GM13976 (cell line): ENCODE measurements at regions of chr3 and their contacts with region 1.

Region 1: DNA sequence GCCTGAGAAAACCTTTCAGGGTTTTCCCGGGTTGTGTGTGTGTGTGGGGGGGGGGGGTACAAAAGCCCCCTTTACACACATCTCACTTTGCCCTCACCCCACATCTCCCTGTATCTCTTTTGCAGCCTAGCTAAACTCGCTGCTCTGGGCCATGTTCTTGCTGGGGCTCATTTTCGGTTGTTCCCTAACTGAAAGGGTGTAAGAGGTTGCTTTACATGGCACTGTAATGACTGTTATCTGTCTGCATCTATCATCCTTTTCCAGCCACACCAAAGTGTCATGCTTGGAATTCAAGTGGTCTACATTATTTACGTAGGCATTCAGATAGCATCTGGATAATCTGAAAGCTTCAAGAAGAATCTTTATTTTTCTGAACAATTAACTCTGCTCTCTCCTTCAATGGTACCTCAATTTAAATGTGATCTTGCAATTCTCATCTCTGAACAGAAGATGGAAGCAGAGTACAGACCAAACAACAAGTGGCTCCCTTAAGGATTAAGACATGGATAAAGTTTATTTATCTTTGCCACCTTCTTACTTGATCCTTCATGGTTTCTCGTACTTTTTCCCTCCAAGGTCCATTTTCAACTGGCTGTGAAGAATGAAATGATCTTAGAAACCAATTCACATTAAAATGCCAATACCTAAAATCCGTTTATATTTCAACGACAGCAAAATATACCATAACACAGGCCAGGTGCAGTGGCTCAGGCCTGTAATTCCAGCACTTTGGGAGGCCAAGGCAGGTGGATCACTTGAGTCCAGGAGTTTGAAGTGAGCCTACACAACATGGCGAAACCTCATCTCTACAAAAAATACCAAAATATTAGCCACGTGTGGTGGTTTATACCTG is 34.9 kb downstream of the DCLK3 start:
- DNase-seq: peak; percentile 51
- CTCF ChIP-seq: peak; percentile 41

Region 2: GRCh38 chr3:36837089-36837488 is 107.7 kb after region 1 on chr3:
- in situ Hi-C with region 1: no loop called
- DNase-seq: no peak
- CTCF ChIP-seq: peak; percentile 31

Region 3: DNA sequence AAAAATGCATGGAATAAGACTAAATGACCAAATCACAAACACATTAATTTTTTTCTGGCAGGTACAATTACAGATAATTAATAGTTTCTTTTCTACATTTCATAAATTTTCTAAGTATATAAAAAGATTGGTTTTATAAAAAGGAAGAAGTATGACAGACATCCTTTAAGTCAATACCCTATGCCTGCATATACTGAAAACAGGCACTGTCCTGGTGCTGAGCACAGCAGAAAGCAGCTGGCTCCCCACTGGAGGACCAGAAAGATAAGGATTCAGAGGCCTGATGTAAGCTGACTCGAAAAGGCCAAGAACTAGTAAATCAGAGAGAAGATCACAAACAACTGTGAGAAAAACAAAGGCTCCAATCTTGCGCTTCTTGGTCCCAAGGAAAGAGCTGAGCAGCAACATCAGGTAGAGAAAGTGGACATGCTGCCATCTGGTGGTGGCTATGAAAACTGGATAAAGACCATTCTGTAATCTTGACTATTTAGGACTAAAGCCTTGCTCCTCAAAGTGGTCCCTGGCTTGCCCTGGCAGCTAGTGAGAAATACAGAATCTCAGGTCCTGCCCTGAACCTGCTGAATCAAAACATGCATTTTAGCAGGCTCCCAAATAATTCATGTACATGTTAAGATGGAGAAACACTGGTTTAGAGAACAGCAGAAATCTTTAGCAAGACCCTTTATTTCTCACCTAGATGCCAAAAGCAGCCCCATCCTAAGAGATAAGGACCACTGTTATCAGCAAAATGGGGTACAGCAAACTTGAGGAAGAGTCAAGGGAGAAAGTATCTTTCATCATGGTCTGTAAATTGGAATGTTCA is 139.4 kb after region 1 on chr3:
- in situ Hi-C with region 1: loop called (anchors 10 kb)
- DNase-seq: peak; percentile 61
- CTCF ChIP-seq: peak; percentile 75

Region 4: GRCh38 chr3:36881735-36882134 is 152.3 kb after region 1 on chr3:
- in situ Hi-C with region 1: no loop called
- DNase-seq: no peak
- CTCF ChIP-seq: no peak

Region 5: DNA sequence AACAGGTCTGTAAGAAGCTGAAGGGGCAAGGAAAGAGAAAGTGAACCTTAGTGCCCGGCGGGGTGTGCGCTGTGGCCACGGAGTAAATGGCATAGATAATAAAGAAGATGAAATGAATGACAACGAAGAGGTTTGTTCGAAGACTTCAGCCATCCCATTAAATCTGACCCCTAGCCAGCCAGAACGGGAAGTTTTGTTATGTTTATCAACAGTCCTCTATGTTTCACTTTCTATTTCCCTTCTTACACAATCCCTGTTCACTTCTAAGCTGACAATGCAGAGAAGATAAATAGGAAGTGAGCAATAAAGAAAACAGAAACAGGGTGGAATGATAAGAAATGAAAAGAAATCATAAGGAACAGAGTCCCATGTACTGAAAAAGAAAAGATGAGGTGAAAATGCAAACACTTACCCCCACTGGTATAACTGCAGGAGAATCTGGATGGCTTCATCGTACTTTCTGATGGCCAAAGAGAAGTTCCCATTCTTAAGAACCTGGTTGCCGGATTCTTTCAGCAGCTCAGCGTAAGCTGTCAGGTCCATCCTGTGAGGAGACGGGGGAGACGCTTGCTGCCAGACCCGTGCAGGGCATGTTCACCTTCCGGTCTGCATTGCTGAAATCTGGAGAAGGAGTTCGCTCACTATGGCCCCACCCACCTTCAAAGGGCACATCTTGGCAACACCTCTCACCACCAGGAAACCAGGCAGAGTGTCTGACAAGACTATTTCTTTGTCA is 178.6 kb after region 1 on chr3:
- in situ Hi-C with region 1: no loop called
- DNase-seq: no peak
- CTCF ChIP-seq: no peak

Region 6: GRCh38 chr3:36969540-36970432 is 240.4 kb after region 1 on chr3:
- in situ Hi-C with region 1: loop called (anchors 25 kb)
- DNase-seq: peak; percentile 83
- CTCF ChIP-seq: no peak

Region 7: DNA sequence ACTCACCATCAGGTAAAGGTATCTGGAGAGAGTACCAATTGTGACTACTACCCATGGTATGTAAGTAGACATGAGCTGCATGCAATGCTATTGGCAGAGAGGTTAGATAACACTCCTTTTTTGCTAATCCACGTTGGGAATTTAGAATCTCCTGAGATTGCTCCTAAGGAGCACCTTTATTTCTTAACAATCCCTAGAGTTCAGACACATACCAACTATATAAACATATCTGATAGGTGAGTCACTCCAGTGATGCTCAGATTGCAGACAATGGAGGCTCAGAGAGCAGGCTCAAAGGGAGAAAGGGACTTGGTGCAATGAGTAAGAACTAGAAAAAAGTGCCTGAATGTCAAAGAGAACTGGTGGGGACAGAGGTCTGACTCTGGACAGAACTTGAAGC is 492.0 kb after region 1 on chr3:
- in situ Hi-C with region 1: loop called (anchors 25 kb)
- DNase-seq: no peak
- CTCF ChIP-seq: no peak